PC-9 (cell line): ENCODE measurements at regions of chr12 and their contacts with region 1.

Region 1: DNA sequence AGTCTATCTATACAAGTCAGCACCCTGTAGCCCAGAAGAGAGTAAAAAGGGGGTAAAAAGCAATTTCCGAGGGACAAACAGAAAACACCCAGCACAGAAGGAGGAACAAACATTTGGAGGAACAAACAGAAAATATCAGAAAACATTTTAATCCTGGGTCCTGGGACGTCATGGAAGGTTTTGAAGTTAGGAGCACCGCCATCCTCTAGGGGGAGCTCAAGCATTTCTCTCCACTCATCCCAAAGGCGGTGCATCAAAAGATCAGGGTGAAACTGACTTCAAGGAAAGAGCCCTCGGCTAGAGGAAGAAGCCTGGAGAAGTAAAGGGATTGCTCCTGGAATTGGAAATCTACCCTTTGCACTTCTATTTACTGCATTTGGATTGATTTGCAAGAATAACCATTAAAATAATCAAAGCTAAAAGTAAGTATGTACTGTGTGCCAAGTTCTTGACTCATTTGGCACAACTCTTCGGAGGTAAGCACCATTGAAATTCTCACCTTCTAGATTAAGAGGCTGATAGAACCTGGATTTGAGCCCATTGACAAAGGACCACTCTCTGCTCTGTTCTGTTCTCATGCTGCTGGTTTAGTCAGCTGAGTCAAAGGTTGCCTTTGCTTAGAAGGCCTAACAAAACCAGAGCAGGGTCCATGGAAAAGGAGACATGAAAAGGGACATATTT is 17.2 kb upstream of the POC1B start:
- DNase-seq: peak; percentile 60 to 62
- H3K4me3 ChIP-seq: no peak overlapping the region
- H3K27ac ChIP-seq: no peak overlapping the region
- H3K4me1 ChIP-seq: no peaks in the 10 kb centered on the region
- H3K27me3 ChIP-seq: no peaks in the 10 kb centered on the region
- CTCF ChIP-seq: peak; percentile 92

Region 2: DNA sequence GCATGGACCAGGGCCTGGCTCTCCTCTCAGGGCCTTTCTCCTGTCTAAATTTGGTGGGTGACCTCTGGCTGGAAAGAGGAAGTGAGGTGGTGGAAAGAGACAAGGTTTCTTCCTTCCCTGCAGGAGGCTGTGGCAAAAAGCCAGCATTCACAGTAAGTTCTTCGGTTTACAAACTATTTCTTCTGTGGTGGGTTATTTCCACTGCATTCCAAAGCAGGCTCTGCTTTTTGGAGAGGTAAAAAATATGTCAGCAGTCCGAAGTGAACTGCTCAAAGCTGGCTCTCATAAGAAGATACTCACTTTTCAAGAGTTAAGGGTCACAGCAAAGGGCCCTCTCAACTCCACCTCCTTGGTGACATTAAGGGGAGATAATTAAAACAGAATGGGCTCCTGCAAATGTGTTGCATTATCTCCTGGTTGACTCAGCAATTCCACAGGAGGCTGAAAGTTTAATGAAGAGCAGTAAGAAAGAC is 31.7 kb after region 1 on chr12:
- CTCF ChIA-PET with region 1: no interaction called
- POLR2A ChIA-PET with region 1: no interaction called
- intact Hi-C with region 1: no loop called
- DNase-seq: no peak
- H3K4me3 ChIP-seq: no peak overlapping the region
- H3K27ac ChIP-seq: no peak overlapping the region
- H3K4me1 ChIP-seq: no peaks in the 10 kb centered on the region
- H3K27me3 ChIP-seq: no peaks in the 10 kb centered on the region
- CTCF ChIP-seq: no peak

Region 3: DNA sequence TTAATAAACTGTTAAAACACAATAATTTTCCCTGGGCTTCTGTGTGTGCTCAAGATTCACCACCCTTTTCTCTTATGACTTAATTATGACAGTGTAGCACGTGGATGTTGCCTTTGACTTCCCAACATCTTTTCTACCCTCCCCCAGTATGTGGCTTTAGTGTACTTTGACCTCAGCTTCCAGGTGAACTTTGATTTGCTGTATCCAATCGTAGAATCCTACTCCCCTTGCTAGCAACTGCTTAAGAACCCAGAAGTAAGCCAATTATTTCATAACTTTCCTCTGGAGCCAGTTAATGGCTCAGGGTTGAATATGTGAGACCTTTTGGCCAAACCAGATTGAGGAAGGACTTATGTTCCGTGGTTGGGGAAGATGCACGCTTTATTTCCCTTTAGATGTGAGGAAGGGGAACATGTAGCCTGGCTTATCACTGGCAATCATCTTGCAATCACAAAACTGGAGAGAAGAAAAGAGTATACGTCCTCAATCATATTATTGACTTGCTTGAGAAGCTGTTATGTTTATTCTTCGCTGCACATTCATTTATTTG is 425.2 kb after region 1 on chr12:
- CTCF ChIA-PET with region 1: no interaction called
- POLR2A ChIA-PET with region 1: no interaction called
- intact Hi-C with region 1: loop called (anchors 5 kb)
- DNase-seq: no peak
- H3K4me3 ChIP-seq: no peak overlapping the region
- H3K27ac ChIP-seq: no peak overlapping the region
- H3K4me1 ChIP-seq: peaks cover 21% of the 10 kb centered on the region
- H3K27me3 ChIP-seq: no peaks in the 10 kb centered on the region
- CTCF ChIP-seq: no peak

Region 4: GRCh38 chr12:90102957-90103652 is 560.1 kb after region 1 on chr12:
- CTCF ChIA-PET with region 1: no interaction called
- POLR2A ChIA-PET with region 1: no interaction called
- intact Hi-C with region 1: loop called (anchors 5 kb)
- DNase-seq: peak; percentile 7 to 40
- H3K4me3 ChIP-seq: no peak overlapping the region
- H3K27ac ChIP-seq: no peak overlapping the region
- H3K4me1 ChIP-seq: peaks cover 15% of the 10 kb centered on the region
- H3K27me3 ChIP-seq: no peaks in the 10 kb centered on the region
- CTCF ChIP-seq: peak; percentile 61

Region 5: DNA sequence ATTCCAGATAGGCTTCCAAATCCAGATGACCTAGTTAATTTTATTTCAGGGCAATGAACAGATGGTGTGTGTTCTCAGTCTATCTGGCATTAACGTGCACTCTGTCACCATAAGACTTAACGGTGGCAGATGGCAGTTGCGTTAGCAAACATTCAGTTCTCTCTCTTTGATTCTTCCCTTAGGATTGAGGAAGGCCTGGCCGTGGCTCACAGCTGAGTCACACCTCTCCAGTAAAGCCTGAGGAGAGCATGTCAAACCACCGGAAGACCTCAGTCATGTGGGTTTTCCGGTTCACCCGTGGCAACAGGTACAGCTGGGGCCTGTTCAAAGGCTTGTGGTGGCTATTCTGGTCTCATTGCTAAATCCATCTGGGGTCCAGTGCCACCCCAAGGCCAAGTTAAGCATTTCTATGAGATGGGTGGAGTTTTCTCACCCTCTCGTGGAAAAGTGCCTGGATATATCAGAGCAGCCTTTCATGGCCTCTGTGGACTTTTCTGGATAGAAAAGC is 710.7 kb after region 1 on chr12:
- CTCF ChIA-PET with region 1: no interaction called
- POLR2A ChIA-PET with region 1: no interaction called
- intact Hi-C with region 1: loop called (anchors 5 kb)
- DNase-seq: peak; percentile 60 to 65
- H3K4me3 ChIP-seq: no peak overlapping the region
- H3K27ac ChIP-seq: no peak overlapping the region
- H3K4me1 ChIP-seq: no peaks in the 10 kb centered on the region
- H3K27me3 ChIP-seq: no peaks in the 10 kb centered on the region
- CTCF ChIP-seq: no peak

Region 6: DNA sequence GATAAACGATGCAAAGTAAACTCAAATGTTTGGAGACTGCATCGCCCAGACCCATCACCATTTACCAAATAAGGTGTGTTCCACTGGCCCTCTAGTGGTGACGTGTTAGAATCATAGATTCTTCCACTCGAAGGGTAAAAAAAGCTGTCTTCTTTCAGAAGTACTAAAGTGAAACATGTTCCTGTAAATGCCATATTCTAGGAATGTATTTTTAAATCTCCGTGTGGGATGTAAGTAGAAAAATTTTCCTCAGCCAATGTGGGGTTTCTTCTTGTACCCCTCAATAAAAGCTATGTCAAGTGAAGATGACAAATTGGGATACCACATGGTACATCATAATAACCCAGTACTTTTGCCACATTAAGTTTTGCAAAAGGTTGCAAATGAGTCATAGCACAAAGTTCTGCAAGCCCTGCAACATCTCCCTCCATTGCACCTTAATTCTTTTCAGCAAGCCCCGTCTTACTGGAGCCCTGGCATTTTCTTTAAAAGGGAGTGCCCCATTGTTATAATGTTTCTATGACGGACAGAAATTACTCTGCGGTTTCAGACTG is 1311.2 kb after region 1 on chr12:
- CTCF ChIA-PET with region 1: no interaction called
- POLR2A ChIA-PET with region 1: no interaction called
- intact Hi-C with region 1: loop called (anchors 10 kb)
- DNase-seq: no peak
- H3K4me3 ChIP-seq: no peak overlapping the region
- H3K27ac ChIP-seq: no peak overlapping the region
- H3K4me1 ChIP-seq: no peaks in the 10 kb centered on the region
- H3K27me3 ChIP-seq: no peaks in the 10 kb centered on the region
- CTCF ChIP-seq: peak; percentile 84